ENCODE measurements at regions of chr11 and their contacts with region 1.

Region 1: GRCh38 chr11:59641156-59641555 is 25.6 kb upstream of the OSBP start:
- DNase-seq: peak; percentile 4
- ATAC-seq: 0 out of 2 replicates have a peak, but pooled peaks have one; percentile 17
- H3K4me3 ChIP-seq: no peak overlapping the region
- H3K27ac ChIP-seq: no peak overlapping the region
- H3K4me1 ChIP-seq: no peaks in the 10 kb centered on the region; the same call in 1 of the 2 replicates
- H3K27me3 ChIP-seq: no peaks in the 10 kb centered on the region
- CTCF ChIP-seq: no peak
- POLR2A ChIP-seq: no peak
- RAD21 ChIP-seq: no peak

Region 2: DNA sequence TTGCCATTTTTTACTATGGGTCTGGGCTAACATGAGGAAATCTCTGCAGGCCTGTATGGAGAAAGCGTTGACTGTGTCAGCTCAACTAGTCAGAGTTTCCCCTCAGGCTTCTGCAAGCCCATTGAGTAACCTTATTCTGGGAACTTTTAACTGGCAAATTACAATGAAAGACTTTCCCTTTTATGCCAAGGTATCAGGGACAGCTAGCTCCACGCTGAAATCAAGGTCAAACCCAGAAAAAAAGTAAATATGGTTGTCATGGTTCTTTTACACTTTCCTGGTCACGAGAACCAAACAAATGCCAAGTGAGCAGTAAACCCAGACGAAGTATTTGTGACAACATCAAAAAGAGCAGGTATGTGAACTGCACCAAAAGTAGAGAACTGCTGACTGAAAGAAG is 39.4 kb before region 1 on chr11:
- CTCF ChIA-PET with region 1: no interaction called
- POLR2A ChIA-PET with region 1: no interaction called
- dilution Hi-C with region 1: no loop called
- in situ Hi-C with region 1: loop called (anchors 5 kb)
- intact Hi-C with region 1: no loop called
- DNase-seq: no peak
- ATAC-seq: no peak
- H3K4me3 ChIP-seq: no peak overlapping the region
- H3K27ac ChIP-seq: no peak overlapping the region
- H3K4me1 ChIP-seq: no peaks in the 10 kb centered on the region
- H3K27me3 ChIP-seq: no peaks in the 10 kb centered on the region
- CTCF ChIP-seq: no peak
- POLR2A ChIP-seq: no peak
- RAD21 ChIP-seq: no peak